Activated CD8-positive, alpha-beta T cell treated with anti-CD3 and anti-CD28 coated beads, Interleukin-2, amount 10 ng/mL, durations not matched to agents 7 days and 5 days (primary cell): ENCODE measurements at regions of chr17 and their contacts with region 1.

Region 1: DNA sequence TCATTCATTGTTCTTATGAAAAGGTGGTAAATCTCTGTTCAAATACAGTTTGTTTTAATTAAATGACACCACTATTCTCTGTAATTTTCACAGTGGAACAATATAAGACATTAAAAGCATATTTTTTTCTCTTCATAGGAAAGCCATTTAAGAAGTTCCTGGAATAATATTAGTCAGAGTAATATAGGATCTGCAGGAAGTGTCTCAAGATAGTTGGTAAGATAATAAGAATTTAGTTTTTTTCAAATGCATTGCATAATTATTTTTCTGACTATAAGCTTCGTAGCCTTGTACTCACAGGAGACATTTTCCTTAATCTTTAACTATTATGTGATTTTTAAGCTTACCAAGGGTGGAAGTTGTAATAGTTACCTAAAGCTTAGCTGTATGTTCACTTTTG is 16.9 kb downstream of the STXBP4 start:
- DNase-seq: no peak
- ATAC-seq: no peak
- H3K4me3 Mint-ChIP-seq: no peak overlapping the region
- H3K27ac Mint-ChIP-seq: no peak overlapping the region
- H3K4me1 Mint-ChIP-seq: no peaks in the 10 kb centered on the region
- H3K27me3 Mint-ChIP-seq: no peaks in the 10 kb centered on the region

Region 2: DNA sequence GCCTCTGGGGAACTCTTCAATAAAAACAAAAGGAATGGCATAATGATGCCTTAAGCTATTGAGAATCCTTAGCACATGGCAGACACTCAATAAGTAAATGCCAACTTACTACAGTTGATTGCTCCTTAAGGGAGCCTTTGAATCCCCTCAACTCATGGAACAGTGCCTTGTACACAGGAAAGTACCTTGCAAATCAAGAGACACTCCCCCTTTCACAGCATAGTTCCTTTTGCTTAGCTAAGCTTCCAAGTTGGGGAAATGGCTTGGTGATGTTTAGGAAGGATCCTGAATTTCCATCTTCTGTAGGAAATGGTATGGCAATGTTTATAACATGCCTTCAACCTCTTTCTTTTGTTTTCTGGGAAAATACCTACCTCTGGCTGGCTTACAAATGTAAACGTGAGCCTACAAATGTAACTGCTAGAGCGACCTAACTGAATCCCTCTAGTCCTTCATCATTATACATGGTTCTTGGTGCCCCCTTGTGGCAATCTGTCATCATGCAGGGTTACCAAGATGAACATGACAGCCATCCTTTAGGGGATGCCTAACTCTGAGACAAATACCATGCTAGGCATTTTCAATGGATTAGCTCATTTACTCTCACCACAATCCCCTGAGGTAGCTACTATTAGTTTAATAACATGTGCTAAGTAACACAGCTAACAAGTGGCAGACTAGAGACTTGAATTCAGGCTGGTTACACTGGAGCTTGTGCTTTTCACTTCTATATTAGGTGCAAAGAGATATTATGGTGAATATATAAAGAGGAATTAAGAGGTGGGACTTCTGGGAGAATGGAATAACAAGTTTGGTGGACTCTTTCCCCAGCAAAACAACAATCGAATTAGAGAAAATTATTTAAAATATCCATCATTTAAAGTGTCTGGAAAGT is 371.2 kb after region 1 on chr17:
- CTCF ChIA-PET with region 1: interaction called, 62 read pairs
- POLR2A ChIA-PET with region 1: no interaction called
- DNase-seq: peak; percentile 87
- ATAC-seq: peak; percentile 88
- H3K4me3 Mint-ChIP-seq: no peak overlapping the region
- H3K27ac Mint-ChIP-seq: no peak overlapping the region
- H3K4me1 Mint-ChIP-seq: peaks cover 11% of the 10 kb centered on the region
- H3K27me3 Mint-ChIP-seq: peaks cover 27% of the 10 kb centered on the region